WTC11 (cell line): ENCODE measurements at regions of chr11 and their contacts with region 1.

Region 1: GRCh38 chr11:61587521-61588453 is 6.9 kb upstream of the SYT7 start:
- DNase-seq: peak; percentile 96
- ATAC-seq: peak; percentile 80
- H3K4me3 Mint-ChIP-seq: peak overlapping the region; percentile 74
- H3K27ac Mint-ChIP-seq: no peak overlapping the region
- H3K4me1 Mint-ChIP-seq: peaks cover 34% of the 10 kb centered on the region
- H3K27me3 Mint-ChIP-seq: peaks cover 59% of the 10 kb centered on the region
- CTCF ChIP-seq: no peak

Region 2: DNA sequence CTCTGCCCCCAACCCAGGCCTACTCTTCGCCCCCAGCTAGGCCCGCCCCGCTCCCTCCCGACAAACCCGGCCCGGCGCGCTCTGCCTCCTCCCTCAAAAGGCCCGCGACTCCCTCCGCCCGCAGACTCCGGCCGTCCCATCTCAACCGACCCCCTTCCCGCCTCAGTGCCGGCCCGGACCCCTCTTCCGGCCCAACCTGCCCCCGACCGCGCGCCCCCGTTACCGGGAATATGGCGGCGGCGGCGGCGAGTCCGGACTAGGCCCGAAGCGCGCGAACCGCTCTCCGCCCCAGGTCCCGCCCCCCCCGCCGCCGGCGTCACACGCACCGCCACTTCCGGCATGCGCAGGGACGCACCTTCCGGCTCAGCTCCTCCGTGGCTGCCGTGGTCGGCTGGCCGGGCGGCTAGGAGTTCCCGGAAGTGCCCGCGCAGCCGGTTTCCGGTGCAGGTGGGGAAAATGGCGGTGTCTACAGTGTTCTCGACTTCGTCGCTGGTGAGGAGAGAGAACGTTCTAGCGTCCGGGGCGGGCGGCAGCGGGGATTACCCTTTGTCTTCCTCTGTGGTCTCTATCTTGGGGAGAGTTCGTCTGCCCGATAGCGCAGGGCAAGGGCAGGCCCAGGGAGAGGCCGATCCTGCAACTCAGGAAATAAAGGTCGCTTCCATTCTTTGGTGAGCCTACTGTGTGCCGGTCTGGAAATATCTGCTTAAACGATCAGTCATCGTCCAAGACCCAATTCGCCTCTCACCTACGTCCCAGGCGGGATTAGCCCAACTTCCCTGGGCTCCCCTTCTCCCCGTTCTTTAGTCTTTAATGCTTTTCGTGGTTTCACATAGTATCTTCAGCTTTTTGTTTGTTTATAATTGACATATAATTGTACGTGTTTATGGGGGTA is 157.8 kb before region 1 on chr11 and contains the starts of genes CPSF7 and SDHAF2:
- CTCF ChIA-PET with region 1: no interaction called
- POLR2A ChIA-PET with region 1: no interaction called
- DNase-seq: peak; percentile 97
- ATAC-seq: peak; percentile 86
- H3K4me3 Mint-ChIP-seq: peak within 1 kb of the TSS; percentile 100
- H3K27ac Mint-ChIP-seq: peak within 1 kb of the TSS; percentile 100
- H3K4me1 Mint-ChIP-seq: peaks cover 20% of the 10 kb centered on the region
- H3K27me3 Mint-ChIP-seq: no peaks in the 10 kb centered on the region
- CTCF ChIP-seq: no peak
- total RNA-seq, gene CPSF7: 86.0 to 90.7 TPM (median 88.3 TPM) in 3 replicates
- total RNA-seq, gene SDHAF2: 36.2 to 36.8 TPM (median 36.5 TPM) in 3 replicates

Region 3: DNA sequence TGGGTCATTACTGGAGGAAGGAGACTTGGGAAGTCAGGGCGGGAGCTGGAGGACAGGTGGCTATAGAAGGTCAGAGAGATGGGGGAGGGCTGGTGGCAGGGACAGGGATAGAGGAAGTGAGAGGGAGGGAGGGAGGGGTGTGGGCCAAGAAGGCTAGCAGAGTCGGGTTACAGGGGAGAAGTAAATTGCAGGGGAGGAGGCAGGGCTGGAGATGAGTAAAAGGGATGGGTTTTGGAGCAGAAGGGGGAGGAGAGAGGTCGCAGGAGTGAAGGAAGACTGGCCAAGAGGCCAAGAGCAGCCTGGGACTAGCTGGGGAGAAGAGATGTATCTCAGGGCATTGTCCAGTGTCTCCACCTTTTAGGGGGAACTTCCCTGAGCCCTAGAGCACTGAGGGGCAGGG is 46.2 kb before region 1 on chr11:
- CTCF ChIA-PET with region 1: interaction called, 16 read pairs
- POLR2A ChIA-PET with region 1: interaction called, 3 read pairs
- DNase-seq: peak; percentile 54
- ATAC-seq: peak; percentile 85
- H3K4me3 Mint-ChIP-seq: peak overlapping the region; percentile 22; the same call in 1 of the 2 replicates
- H3K27ac Mint-ChIP-seq: peak overlapping the region; percentile 60; the same call in 1 of the 2 replicates
- H3K4me1 Mint-ChIP-seq: peaks cover 47% of the 10 kb centered on the region
- H3K27me3 Mint-ChIP-seq: no peaks in the 10 kb centered on the region; the same call in 1 of the 2 replicates
- CTCF ChIP-seq: no peak

Region 4: GRCh38 chr11:61598886-61599868 is 11.4 kb after region 1 on chr11:
- CTCF ChIA-PET with region 1: interaction called, 45 read pairs
- POLR2A ChIA-PET with region 1: interaction called, 9 read pairs
- DNase-seq: peak; percentile 59
- ATAC-seq: peak; percentile 77
- H3K4me3 Mint-ChIP-seq: peak overlapping the region; percentile 38; the same call in 1 of the 2 replicates
- H3K27ac Mint-ChIP-seq: peak overlapping the region; percentile 60; the same call in 1 of the 2 replicates
- H3K4me1 Mint-ChIP-seq: peaks cover 44% of the 10 kb centered on the region
- H3K27me3 Mint-ChIP-seq: no peaks in the 10 kb centered on the region; the same call in 1 of the 2 replicates
- CTCF ChIP-seq: no peak

Region 5: DNA sequence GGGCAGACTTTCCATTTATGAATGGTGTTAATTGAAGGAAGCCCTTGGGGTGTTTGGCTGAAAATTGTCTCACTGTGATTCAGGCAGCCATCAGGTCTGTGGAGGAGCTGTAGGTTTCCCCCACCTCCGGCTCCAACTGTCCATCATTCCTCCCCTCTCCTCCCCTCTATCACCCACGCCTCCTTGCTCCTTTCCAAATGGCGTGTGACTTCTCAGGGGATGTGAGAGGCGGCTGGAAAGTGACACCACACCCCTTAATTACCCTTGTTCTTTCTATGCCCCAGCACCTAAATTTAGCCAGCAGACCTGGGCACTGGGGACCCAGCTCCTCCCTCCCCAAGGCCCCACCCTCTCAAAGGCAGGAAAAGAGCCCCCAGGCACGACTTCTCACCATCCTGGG is 31.2 kb after region 1 on chr11:
- CTCF ChIA-PET with region 1: interaction called, 15 read pairs
- POLR2A ChIA-PET with region 1: no interaction called
- DNase-seq: no peak
- ATAC-seq: peak; percentile 57
- H3K4me3 Mint-ChIP-seq: no peak overlapping the region
- H3K27ac Mint-ChIP-seq: no peak overlapping the region
- H3K4me1 Mint-ChIP-seq: peaks cover 23% of the 10 kb centered on the region
- H3K27me3 Mint-ChIP-seq: no peaks in the 10 kb centered on the region; the same call in 1 of the 2 replicates
- CTCF ChIP-seq: no peak

Region 6: GRCh38 chr11:61645179-61645868 is 57.5 kb after region 1 on chr11:
- CTCF ChIA-PET with region 1: no interaction called
- POLR2A ChIA-PET with region 1: no interaction called
- DNase-seq: no peak
- ATAC-seq: no peak
- H3K4me3 Mint-ChIP-seq: no peak overlapping the region
- H3K27ac Mint-ChIP-seq: no peak overlapping the region
- H3K4me1 Mint-ChIP-seq: no peaks in the 10 kb centered on the region
- H3K27me3 Mint-ChIP-seq: no peaks in the 10 kb centered on the region
- CTCF ChIP-seq: no peak